ENCODE measurements at regions of chr3 and their contacts with region 1.

Region 1: DNA sequence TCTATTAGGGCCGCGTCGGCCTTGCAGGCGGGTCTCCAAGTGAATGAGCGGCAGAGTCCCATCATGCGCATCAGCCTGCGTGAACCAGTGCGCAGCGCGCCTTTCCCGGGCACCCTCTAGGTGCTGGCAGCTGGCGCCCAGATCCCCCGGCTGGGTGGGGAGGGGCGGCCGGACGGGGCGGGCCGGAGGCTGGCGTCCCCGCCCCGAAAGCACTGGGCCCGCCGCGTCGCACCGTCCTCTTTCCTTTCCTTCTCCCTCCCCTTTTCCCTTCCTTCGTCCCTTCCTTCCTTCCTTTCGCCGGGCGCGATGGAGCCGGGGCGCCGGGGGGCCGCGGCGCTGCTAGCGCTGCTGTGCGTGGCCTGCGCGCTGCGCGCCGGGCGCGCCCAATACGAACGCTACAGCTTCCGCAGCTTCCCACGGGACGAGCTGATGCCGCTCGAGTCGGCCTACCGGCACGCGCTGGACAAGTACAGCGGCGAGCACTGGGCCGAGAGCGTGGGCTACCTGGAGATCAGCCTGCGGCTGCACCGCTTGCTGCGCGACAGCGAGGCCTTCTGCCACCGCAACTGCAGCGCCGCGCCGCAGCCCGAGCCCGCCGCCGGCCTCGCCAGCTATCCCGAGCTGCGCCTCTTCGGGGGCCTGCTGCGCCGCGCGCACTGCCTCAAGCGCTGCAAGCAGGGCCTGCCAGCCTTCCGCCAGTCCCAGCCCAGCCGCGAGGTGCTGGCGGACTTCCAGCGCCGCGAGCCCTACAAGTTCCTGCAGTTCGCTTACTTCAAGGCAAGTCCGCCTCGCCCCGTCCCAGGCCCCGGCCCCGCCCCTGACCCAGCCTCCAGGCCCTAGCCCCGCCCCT is at the start of gene CRTAP:
- DNase-seq: peak; percentile 82 to 96
- H3K4me3 ChIP-seq: peak within 1 kb of the TSS; percentile 73
- H3K27ac ChIP-seq: peak within 1 kb of the TSS; percentile 72
- H3K4me1 ChIP-seq: 0 out of 2 replicates have a peak, but pooled peaks cover 7% of the 10 kb centered on the region
- H3K27me3 ChIP-seq: no peaks in the 10 kb centered on the region
- CTCF ChIP-seq: no peak
- total RNA-seq, gene CRTAP: 121 and 134 TPM in 2 replicates

Region 2: GRCh38 chr3:32947789-32948238 is 166.2 kb before region 1 on chr3:
- CTCF ChIA-PET with region 1: no interaction called
- POLR2A ChIA-PET with region 1: no interaction called
- intact Hi-C with region 1: loop called (anchors 5 kb)
- DNase-seq: peak; percentile 60 to 78
- H3K4me3 ChIP-seq: no peak overlapping the region
- H3K27ac ChIP-seq: no peak overlapping the region
- H3K4me1 ChIP-seq: no peaks in the 10 kb centered on the region
- H3K27me3 ChIP-seq: no peaks in the 10 kb centered on the region
- CTCF ChIP-seq: peak; percentile 73

Region 3: DNA sequence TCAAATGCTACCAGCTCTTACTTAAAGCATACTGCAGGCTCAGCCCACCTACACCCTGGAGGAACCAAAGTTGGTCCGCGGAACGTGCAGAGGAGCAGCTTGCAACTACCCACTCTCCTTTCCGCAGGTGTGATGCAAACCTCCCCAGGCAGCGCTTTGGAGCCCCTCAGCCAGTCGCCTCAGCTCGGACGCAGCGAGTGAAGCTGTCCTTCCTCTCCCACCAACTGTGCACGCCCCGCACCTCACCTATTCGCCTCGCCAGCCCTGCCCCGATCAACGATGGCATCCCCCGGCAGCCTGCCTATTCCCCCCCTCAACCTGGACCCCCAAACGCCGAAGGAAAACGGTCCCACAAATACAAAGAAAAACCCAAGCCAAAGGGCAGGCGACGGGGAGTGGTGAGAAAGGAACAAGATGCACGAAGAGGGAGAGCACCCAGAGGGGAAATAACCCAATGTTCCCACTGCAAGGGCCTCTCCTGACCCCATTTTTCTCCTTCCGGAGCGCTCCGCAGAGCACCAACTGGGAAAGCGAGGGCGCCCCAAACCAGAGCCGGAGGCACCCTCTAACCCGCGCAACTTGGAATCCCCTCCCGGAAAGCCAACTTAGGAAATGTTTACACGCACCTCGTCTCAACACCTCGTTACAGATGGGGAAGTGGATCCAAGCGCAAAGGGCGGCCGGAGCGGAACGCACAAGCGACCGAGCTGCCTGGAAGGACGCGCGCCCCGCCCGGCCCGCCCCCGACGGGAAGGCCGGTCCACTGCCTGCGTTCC is 17.7 kb before region 1 on chr3:
- CTCF ChIA-PET with region 1: no interaction called
- POLR2A ChIA-PET with region 1: no interaction called
- intact Hi-C with region 1: loop called (anchors 1 kb)
- DNase-seq: peak in 1 of 2 experiments; percentile 39
- H3K4me3 ChIP-seq: peak overlapping the region; percentile 74
- H3K27ac ChIP-seq: 0 out of 2 replicates have a peak overlapping the region, but pooled peaks have one; percentile 78
- H3K4me1 ChIP-seq: peaks cover 11% of the 10 kb centered on the region; the same call in 1 of the 2 replicates
- H3K27me3 ChIP-seq: no peaks in the 10 kb centered on the region
- CTCF ChIP-seq: no peak

Measured in PC-9 (cell line).